Dorsolateral prefrontal cortex (tissue), 120 donors: ENCODE measurements at regions of chr22 and their contacts with region 1.

Region 1: GRCh38 chr22:31089160-31090100 is 8.3 kb downstream of the SMTN start:
- DNase-seq: peak in 7 of 10 donors; percentile 42 to 75 (median 51)
- H3K4me3 ChIP-seq: no peak overlapping the region
- H3K27ac ChIP-seq: peak overlapping the region in 10 of 59 donors; percentile 5 to 68 (median 14)
- H3K27me3 ChIP-seq: no peaks in the 10 kb centered on the region
- CTCF ChIP-seq: peak; percentile 39 to 90 (median 80)

Region 2: GRCh38 chr22:31107178-31107893 is 17.9 kb after region 1 on chr22 and contains the start of gene SELENOM:
- intact Hi-C with region 1: loop called in 1 of 2 experiments (anchors 2 kb)
- DNase-seq: peak; percentile 82 to 97 (median 93)
- H3K4me3 ChIP-seq: peak within 1 kb of the TSS; percentile 59 to 97 (median 88)
- H3K27ac ChIP-seq: peak within 1 kb of the TSS; percentile 7 to 97 (median 92)
- H3K27me3 ChIP-seq: no peaks in the 10 kb centered on the region
- CTCF ChIP-seq: peak; percentile 44 to 97 (median 86)
- total RNA-seq, gene SELENOM: 76.0 to 161 (median 116) TPM

Region 3: GRCh38 chr22:31160328-31160978 is 71.0 kb after region 1 on chr22:
- intact Hi-C with region 1: no loop called
- DNase-seq: peak in 2 of 10 donors; percentile 18 to 29
- H3K4me3 ChIP-seq: peak overlapping the region; percentile 69 to 99 (median 86)
- H3K27ac ChIP-seq: peak overlapping the region; percentile 53 to 96 (median 87)
- H3K27me3 ChIP-seq: no peaks in the 10 kb centered on the region
- CTCF ChIP-seq: no peak

Region 4: GRCh38 chr22:31230871-31231621 is 141.6 kb after region 1 on chr22:
- intact Hi-C with region 1: loop called (anchors 2 to 10 kb)
- DNase-seq: peak in 5 of 10 donors; percentile 20 to 60 (median 47)
- H3K4me3 ChIP-seq: peak overlapping the region in 1 of 59 donors; percentile 13
- H3K27ac ChIP-seq: peak overlapping the region in 44 of 59 donors; percentile 4 to 87 (median 59)
- H3K27me3 ChIP-seq: no peaks in the 10 kb centered on the region
- CTCF ChIP-seq: peak in 55 of 56 donors; percentile 32 to 81 (median 66)

Region 5: DNA sequence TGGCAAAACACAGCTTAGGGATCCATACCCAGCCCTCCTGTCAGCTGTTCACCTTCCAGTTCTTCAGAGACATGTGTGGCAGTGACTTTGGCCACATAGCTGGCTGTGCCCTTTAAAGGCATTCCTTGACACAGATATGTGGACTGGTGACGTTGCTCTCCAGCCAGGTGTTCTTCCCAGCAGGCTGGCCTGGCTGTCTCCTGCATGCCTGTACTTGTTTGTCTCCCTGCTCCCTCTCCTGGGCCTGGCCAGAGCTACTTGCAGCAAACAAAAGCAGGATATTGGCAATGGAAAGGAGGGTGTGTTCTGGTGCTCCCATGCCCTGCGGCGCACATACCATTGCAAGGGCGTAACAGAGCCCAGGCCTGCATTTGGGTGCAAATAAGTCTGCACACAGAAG is 164.5 kb after region 1 on chr22:
- intact Hi-C with region 1: loop called in 1 of 2 experiments (anchors 10 kb)
- DNase-seq: no peak
- H3K4me3 ChIP-seq: no peak overlapping the region
- H3K27ac ChIP-seq: peak overlapping the region in 1 of 59 donors; percentile 12
- H3K27me3 ChIP-seq: no peaks in the 10 kb centered on the region
- CTCF ChIP-seq: no peak